ENCODE measurements at regions of chr19 and their contacts with region 1.

Region 1: GRCh38 chr19:5680437-5681368 is at the starts of genes HSD11B1L and MICOS13:
- DNase-seq: peak; percentile 98 to 99
- ATAC-seq: peak; percentile 90 to 98 (median 95)
- H3K4me3 ChIP-seq: peak within 1 kb of the TSS; percentile 47 to 97 (median 82)
- H3K27ac ChIP-seq: peak within 1 kb of the TSS; percentile 57 to 97 (median 93)
- H3K4me1 ChIP-seq: peaks cover 5 to 28% (median 20%) of the 10 kb centered on the region in 9 donors
- H3K27me3 ChIP-seq: no peaks in the 10 kb centered on the region
- CTCF ChIP-seq: no peak
- total RNA-seq, gene HSD11B1L: 3.3 to 7.6 (median 4.2) TPM
- total RNA-seq, gene MICOS13: 122 to 173 (median 133) TPM

Region 2: GRCh38 chr19:5622463-5623396 is 58.0 kb before region 1 on chr19 and contains the starts of genes SAFB and SAFB2:
- intact Hi-C with region 1: loop called in 4 of 10 experiments (anchors 2 to 5 kb)
- DNase-seq: peak; percentile 99 to 100
- ATAC-seq: peak; percentile 95 to 98 (median 96)
- H3K4me3 ChIP-seq: peak within 1 kb of the TSS; percentile 89 to 100 (median 97)
- H3K27ac ChIP-seq: peak within 1 kb of the TSS; percentile 93 to 98 (median 96)
- H3K4me1 ChIP-seq: peaks cover 23 to 83% (median 76%) of the 10 kb centered on the region in 9 donors
- H3K27me3 ChIP-seq: no peaks in the 10 kb centered on the region
- CTCF ChIP-seq: no peak
- total RNA-seq, gene SAFB: 44.0 to 72.5 (median 50.2) TPM
- total RNA-seq, gene SAFB2: 34.4 to 70.4 (median 45.9) TPM

Region 3: GRCh38 chr19:5719961-5720790 is 39.5 kb after region 1 on chr19 and contains the starts of genes CATSPERD and LONP1:
- intact Hi-C with region 1: loop called in 1 of 10 experiments (anchors 2 kb)
- DNase-seq: peak; percentile 97 to 98
- ATAC-seq: peak; percentile 96 to 99 (median 98)
- H3K4me3 ChIP-seq: peak within 1 kb of the TSS; percentile 86 to 100 (median 96)
- H3K27ac ChIP-seq: peak within 1 kb of the TSS; percentile 83 to 99 (median 93)
- H3K4me1 ChIP-seq: peaks cover 0 to 46% (median 29%) of the 10 kb centered on the region in 9 donors
- H3K27me3 ChIP-seq: no peaks in the 10 kb centered on the region
- CTCF ChIP-seq: peak; percentile 85 to 99 (median 94)
- total RNA-seq, gene CATSPERD: not detected
- total RNA-seq, gene LONP1: 71.4 to 101 (median 88.5) TPM

Measured in heart right ventricle (tissue), 16 donors.